Activated CD8-positive, alpha-beta memory T cell treated with anti-CD3 and anti-CD28 coated beads, Interleukin-2, amount 10 ng/mL, durations not matched to agents 7 days and 5 days (primary cell): ENCODE measurements at regions of chr9 and their contacts with region 1.

Region 1: GRCh38 chr9:120755827-120756434 is 37.3 kb downstream of the FBXW2 start:
- DNase-seq: peak; percentile 76
- ATAC-seq: peak; percentile 65
- H3K4me3 Mint-ChIP-seq: no peak overlapping the region
- H3K27ac Mint-ChIP-seq: no peak overlapping the region
- H3K4me1 Mint-ChIP-seq: peaks cover 6% of the 10 kb centered on the region
- H3K27me3 Mint-ChIP-seq: no peaks in the 10 kb centered on the region

Region 2: DNA sequence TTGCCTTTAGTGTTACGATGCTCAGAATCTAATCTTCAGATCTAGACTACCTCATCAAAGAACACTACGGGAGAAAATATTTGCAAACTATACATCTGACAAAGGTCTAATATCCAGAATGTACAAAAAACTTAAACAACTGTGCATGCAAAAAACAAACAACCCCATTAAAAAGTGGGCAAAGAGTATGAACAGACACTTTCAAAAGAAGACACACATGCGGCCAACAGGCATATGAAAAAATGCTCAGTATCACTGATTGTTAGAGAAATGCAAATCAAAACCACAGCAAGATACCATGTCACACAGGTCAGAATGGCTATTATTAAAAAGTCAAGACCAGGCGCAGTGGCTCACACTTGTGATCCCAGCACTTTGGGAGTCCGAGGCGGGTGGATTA is 10.7 kb before region 1 on chr9:
- CTCF ChIA-PET with region 1: interaction called, 12 read pairs
- DNase-seq: no peak
- ATAC-seq: no peak
- H3K4me3 Mint-ChIP-seq: no peak overlapping the region
- H3K27ac Mint-ChIP-seq: no peak overlapping the region
- H3K4me1 Mint-ChIP-seq: peaks cover 5% of the 10 kb centered on the region
- H3K27me3 Mint-ChIP-seq: no peaks in the 10 kb centered on the region

Region 3: DNA sequence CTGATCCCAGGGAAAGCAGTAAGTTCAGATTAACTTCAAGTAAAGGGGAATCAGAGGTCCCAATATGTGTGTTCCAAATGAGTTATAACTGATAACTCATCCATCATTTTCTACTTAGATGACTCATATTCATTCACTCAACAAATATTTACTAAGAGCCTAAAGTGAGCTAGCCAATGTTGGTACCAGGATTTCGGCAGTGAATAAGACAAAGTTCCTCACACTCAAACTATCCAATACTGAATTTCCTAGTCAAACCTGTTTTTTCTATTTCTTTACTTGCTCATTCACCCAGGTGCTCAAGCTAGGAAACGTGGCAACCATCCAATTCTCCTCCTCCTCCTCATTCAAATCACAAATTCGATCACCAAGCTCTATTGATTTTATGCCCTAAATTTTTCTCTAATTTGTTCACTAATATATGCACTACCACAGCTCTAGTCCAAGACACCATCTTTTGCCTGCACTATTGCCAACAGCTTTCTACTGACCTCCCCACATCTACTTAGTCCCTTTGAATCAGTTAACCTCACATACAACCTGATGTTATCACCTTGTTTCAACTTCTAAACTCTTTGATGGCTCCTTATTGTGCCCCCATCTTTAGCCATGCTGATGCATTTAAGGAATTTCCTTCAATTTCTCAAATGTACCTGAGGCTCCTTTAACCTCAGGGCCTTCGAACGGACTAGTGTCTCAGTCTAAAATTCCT is 11.7 kb after region 1 on chr9:
- CTCF ChIA-PET with region 1: interaction called, 17 read pairs
- DNase-seq: no peak
- ATAC-seq: no peak
- H3K4me3 Mint-ChIP-seq: no peak overlapping the region
- H3K27ac Mint-ChIP-seq: no peak overlapping the region
- H3K4me1 Mint-ChIP-seq: peaks cover 55% of the 10 kb centered on the region
- H3K27me3 Mint-ChIP-seq: no peaks in the 10 kb centered on the region

Region 4: GRCh38 chr9:120890320-120891244 is 134.7 kb after region 1 on chr9:
- CTCF ChIA-PET with region 1: no interaction called
- DNase-seq: no peak
- ATAC-seq: peak; percentile 10
- H3K4me3 Mint-ChIP-seq: peak overlapping the region; percentile 56
- H3K27ac Mint-ChIP-seq: peak overlapping the region; percentile 96
- H3K4me1 Mint-ChIP-seq: peaks cover 77% of the 10 kb centered on the region
- H3K27me3 Mint-ChIP-seq: no peaks in the 10 kb centered on the region

Region 5: GRCh38 chr9:120936011-120936763 is 180.3 kb after region 1 on chr9:
- CTCF ChIA-PET with region 1: interaction called, 17 read pairs
- DNase-seq: peak; percentile 93
- ATAC-seq: peak; percentile 75
- H3K4me3 Mint-ChIP-seq: peak overlapping the region; percentile 31
- H3K27ac Mint-ChIP-seq: peak overlapping the region; percentile 87
- H3K4me1 Mint-ChIP-seq: peaks cover 57% of the 10 kb centered on the region
- H3K27me3 Mint-ChIP-seq: peaks cover 2% of the 10 kb centered on the region

Region 6: GRCh38 chr9:120985810-120986222 is 229.9 kb after region 1 on chr9:
- CTCF ChIA-PET with region 1: interaction called, 24 read pairs
- DNase-seq: no peak
- ATAC-seq: no peak
- H3K4me3 Mint-ChIP-seq: no peak overlapping the region
- H3K27ac Mint-ChIP-seq: no peak overlapping the region
- H3K4me1 Mint-ChIP-seq: peaks cover 2% of the 10 kb centered on the region
- H3K27me3 Mint-ChIP-seq: peaks cover 7% of the 10 kb centered on the region

Region 7: DNA sequence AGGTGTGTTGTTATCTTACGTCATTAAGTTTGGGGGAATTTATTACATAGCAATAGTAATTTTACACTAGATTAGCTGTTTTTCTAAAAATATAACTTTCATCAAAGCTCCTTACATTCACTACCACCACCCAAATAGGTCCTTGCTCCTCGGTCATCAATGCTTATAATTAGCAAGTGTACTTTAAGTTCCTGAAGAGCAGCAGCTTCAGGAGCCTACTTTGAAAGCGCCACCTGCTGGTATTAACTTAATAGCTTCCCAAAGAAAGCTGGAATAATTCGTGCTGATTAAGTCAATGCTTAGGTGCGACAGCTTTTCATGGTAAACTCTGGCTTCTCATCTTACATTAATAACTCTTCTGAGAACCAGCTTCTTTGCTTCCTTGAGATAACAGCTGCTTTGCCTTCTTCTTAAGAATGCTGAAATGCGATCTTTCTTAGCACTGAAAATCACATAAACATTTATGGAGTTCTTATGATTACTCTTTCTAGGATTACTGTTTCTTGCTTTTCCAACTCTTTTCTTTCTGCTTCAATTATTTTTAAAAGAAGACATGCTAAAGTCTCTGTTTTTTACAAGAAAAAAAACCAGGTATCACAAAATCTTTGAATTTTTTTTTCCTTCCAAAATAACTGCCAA is 304.2 kb after region 1 on chr9:
- CTCF ChIA-PET with region 1: interaction called, 24 read pairs
- DNase-seq: no peak
- ATAC-seq: peak; percentile 55
- H3K4me3 Mint-ChIP-seq: no peak overlapping the region
- H3K27ac Mint-ChIP-seq: no peak overlapping the region
- H3K4me1 Mint-ChIP-seq: peaks cover 10% of the 10 kb centered on the region
- H3K27me3 Mint-ChIP-seq: peaks cover 4% of the 10 kb centered on the region

Region 8: DNA sequence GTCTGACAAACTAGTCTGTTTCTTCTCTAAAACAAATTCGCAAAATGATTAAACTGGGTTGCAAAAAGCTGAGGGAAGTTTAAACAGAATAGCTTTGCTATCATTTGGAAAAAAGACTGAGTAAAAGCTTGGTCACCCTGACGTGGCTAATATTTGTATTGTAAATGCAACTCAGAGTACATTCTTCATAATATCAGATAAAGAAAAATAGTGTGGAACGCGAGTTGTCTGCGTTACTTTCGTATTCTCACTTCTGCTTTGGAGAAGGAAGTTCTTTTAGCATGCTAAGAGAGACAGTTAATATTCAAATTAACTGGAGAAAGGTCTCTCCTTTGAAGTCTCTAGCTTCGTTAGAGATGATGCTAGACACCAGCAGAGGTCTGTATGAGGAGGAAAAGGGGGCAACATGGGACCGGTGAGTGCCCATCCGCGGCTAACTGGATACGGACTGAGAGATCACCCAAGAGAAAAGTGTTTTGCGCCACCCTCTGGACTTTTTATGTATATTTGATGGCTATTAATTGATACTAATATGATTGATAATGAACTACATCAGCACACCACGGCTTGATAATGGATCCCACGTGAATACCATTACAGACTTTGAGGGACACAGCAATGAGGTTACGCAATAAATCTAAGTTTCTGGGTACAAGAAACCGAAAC is 316.0 kb after region 1 on chr9:
- CTCF ChIA-PET with region 1: interaction called, 12 read pairs
- DNase-seq: peak; percentile 62
- ATAC-seq: no peak
- H3K4me3 Mint-ChIP-seq: peak overlapping the region; percentile 82
- H3K27ac Mint-ChIP-seq: peak overlapping the region; percentile 95
- H3K4me1 Mint-ChIP-seq: peaks cover 60% of the 10 kb centered on the region
- H3K27me3 Mint-ChIP-seq: no peaks in the 10 kb centered on the region